Caco-2 (cell line): ENCODE measurements at regions of chr15 and their contacts with region 1.

Region 1: DNA sequence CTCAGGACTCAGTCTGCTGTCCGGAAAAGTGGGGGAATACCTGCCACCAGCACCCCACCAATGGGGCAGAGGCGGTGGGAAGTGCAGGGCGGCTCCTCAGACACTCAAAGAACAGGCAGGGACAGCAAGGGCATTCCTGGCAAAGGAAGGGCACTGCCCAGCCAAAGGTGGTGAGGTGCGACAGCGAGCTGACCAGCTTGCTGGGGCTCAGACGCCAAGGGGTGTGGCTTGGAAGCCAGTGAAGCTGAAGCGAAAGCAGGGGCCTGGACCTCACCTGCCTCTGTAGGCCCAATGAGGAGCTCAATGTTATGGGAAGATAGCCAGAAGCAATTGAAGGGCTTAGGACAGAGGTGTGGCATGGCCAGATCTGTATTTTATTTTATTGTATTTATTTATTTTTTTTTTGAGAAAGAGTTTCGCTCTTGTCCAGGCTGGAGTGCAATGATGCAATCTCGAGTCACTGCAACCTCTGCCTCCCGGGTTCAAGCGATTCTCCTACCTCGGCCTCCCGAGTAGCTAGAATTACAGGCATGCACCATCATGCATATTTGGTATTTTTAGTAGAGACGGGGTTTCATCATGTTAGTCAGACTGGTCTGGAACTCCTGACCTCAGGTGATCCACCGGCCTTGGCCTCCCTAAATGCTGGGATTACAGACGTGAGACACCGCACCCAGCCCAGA is 4.4 kb upstream of the LMAN1L start:
- DNase-seq: no peak
- H3K4me3 ChIP-seq: no peak overlapping the region
- H3K4me3 Mint-ChIP-seq: no peak overlapping the region
- H3K27ac Mint-ChIP-seq: no peak overlapping the region
- H3K4me1 ChIP-seq: no peaks in the 10 kb centered on the region
- H3K4me1 Mint-ChIP-seq: no peaks in the 10 kb centered on the region
- H3K27me3 ChIP-seq: no peaks in the 10 kb centered on the region
- H3K27me3 Mint-ChIP-seq: peaks cover under 1% of the 10 kb centered on the region
- CTCF ChIP-seq: no peak

Region 2: DNA sequence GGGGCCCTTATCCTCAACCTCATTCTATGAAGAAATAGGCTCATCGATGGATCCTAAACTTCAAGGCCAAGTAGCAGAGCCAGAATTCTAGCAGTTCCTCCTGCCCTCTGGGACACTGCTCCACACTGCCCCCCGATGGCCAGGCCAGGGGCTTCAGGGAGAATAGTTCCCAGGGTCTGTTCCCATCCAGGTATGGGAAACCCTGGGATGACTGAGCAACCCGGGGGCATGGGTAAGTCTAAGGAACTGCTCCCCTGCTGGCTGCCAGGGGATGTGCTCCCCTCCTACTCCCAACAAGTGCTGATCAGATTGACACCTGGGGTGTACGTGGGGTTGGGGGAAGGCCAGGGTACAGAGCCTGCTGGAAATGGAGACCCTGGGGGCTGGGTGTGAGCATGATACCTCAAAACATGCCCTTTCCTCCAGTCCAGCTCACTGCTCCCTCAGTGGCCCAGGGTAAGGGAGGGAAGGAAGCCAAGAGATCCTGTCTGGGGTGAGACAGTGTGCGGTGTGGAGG is 27.2 kb after region 1 on chr15:
- CTCF ChIA-PET with region 1: interaction called, 3 read pairs
- POLR2A ChIA-PET with region 1: no interaction called
- intact Hi-C with region 1: loop called (anchors 2 kb)
- DNase-seq: peak; percentile 76 to 88
- H3K4me3 ChIP-seq: no peak overlapping the region
- H3K4me3 Mint-ChIP-seq: no peak overlapping the region
- H3K27ac Mint-ChIP-seq: no peak overlapping the region
- H3K4me1 ChIP-seq: no peaks in the 10 kb centered on the region
- H3K4me1 Mint-ChIP-seq: no peaks in the 10 kb centered on the region
- H3K27me3 ChIP-seq: no peaks in the 10 kb centered on the region
- H3K27me3 Mint-ChIP-seq: no peaks in the 10 kb centered on the region
- CTCF ChIP-seq: peak; percentile 57 to 83